Cardiac septum (tissue), 1 donor: ENCODE measurements at regions of chr15 and their contacts with region 1.

Region 1: GRCh38 chr15:27358751-27359434 is 387.9 kb downstream of the GABRG3 start:
- DNase-seq: no peak

Region 2: GRCh38 chr15:26721232-26721967 is 637.5 kb before region 1 on chr15:
- intact Hi-C with region 1: no loop called
- DNase-seq: no peak

Region 3: DNA sequence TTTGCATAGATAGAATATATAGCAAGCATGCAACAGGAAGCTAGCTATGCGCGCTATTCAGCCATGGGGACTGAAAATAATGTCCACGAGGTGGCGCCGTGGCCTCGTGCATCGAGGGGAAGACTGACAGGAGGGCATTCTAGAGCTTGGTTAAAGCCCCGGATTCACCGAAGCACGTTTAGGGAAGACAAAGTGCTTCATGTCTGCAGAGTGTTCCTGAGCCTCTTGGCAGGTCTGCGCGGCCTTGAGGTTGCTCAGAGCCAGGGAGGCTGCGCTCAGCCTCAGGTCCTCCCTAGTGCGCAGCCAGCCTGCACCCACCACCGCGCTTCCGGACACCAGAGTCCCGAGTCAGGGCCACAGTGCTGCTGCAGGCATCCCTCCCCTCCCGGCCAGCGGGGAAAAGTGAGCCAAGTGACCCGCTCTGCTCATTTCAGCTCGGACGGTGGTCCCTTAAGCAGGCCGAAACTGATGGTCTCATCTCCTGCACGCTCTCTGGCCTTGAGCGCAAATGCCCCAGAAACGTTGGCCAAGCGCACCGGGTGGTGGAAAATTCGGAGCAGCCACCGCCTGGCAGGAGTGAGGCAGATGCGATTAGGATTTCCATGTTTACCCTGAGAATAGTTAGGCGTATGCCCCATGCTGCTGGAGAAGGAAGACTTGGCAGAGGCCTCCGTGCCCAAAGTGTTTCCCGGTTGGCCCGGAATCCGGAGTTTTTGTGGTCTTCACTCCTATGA is 467.3 kb before region 1 on chr15:
- intact Hi-C with region 1: loop called (anchors 2 kb)
- DNase-seq: no peak

Region 4: GRCh38 chr15:27059610-27060202 is 299.2 kb before region 1 on chr15:
- intact Hi-C with region 1: loop called (anchors 10 kb)
- DNase-seq: no peak

Region 5: DNA sequence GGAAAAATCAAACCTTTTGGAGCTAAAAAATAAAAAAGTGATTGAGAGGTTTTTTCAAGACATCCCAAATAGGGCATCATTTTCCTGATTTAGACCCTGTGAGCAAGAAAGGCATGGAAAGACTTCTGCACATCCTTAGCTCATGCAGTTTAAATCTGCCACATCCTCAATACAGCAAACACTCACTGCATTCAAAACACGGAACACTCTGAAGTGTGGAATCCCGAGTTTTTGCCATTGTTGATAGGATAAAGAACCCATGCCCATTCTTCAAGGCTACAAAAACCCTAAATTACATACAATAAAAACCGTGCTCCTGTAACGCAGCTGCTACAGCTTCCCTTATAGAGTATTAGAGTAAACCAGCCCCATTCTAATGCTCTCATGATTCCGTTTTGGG is 41.2 kb before region 1 on chr15:
- intact Hi-C with region 1: no loop called
- DNase-seq: no peak